Endothelial cell of umbilical vein (primary cell): ENCODE measurements at regions of chr10 and their contacts with region 1.

Region 1: DNA sequence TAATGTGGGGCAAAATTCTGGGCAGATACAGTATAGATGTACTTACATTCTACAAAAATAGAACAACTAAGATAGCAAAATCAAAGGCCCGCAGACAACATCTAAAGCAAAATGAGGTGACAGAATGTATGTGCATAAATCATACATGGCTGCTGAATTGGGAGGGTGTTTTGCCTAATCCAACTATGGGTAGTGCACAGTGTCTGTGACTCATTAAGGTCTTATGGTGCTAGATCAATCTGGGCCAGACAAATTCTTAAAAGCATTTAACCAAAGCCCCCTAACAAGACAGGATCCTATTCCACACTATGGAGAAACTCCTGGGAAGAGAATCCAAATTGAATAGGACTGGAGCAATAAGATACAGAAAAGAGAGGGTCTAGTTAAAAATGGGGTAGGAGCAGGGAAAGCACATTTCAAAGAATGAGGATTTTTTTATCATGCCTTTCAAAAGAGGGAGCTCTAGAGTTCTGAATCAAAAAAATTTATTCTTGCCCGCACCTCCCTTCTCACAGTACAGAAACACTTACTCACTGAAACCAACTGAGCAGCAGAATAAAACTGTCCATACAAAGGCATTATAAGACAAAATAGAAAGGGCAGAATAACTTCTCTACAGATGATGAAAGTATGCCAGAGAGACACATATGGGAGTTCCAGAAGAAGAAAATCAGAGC is 181.3 kb downstream of the RNLS start:
- DNase-seq: peak; percentile 16
- H3K4me3 ChIP-seq: no peak overlapping the region
- H3K27ac ChIP-seq: no peak overlapping the region
- H3K4me1 ChIP-seq: no peaks in the 10 kb centered on the region
- H3K27me3 ChIP-seq: no peaks in the 10 kb centered on the region
- CTCF ChIP-seq: peak in 1 of 2 donors; percentile 17
- POLR2A ChIP-seq: no peak

Region 2: DNA sequence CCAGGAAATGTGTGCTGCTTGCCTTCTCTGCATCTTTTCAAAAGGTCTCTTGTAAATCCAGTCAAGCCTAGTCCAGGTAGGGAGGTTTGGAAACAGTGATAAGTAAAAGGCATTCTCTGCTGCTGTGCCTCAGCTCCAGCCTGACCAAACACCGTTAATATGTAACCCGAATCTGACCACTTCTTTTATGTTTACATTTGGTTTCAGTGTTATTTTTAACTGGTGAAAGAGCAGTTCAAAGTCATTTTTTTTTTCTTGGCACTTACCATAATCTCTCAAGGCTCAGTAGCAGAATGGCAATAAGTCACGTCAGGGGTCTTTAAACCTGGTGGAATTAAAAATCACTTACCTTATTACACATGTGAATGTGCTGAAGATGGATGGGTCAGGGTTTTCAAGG is 321.6 kb before region 1 on chr10:
- CTCF ChIA-PET with region 1: no interaction called
- POLR2A ChIA-PET with region 1: no interaction called
- dilution Hi-C with region 1: no loop called
- intact Hi-C with region 1: no loop called
- DNase-seq: peak; percentile 28
- H3K4me3 ChIP-seq: no peak overlapping the region
- H3K27ac ChIP-seq: no peak overlapping the region
- H3K4me1 ChIP-seq: no peaks in the 10 kb centered on the region
- H3K27me3 ChIP-seq: peaks cover 0 to 4% of the 10 kb centered on the region in 2 experiments
- CTCF ChIP-seq: no peak
- POLR2A ChIP-seq: no peak

Region 3: GRCh38 chr10:88431103-88431502 is 29.3 kb after region 1 on chr10:
- CTCF ChIA-PET with region 1: no interaction called
- POLR2A ChIA-PET with region 1: no interaction called
- dilution Hi-C with region 1: no loop called
- intact Hi-C with region 1: loop called (anchors 1 kb)
- DNase-seq: no peak
- H3K4me3 ChIP-seq: no peak overlapping the region
- H3K27ac ChIP-seq: no peak overlapping the region
- H3K4me1 ChIP-seq: no peaks in the 10 kb centered on the region
- H3K27me3 ChIP-seq: no peaks in the 10 kb centered on the region
- CTCF ChIP-seq: no peak
- POLR2A ChIP-seq: no peak

Region 4: GRCh38 chr10:88456730-88457129 is 54.9 kb after region 1 on chr10:
- CTCF ChIA-PET with region 1: no interaction called
- POLR2A ChIA-PET with region 1: no interaction called
- dilution Hi-C with region 1: no loop called
- intact Hi-C with region 1: no loop called
- DNase-seq: no peak
- H3K4me3 ChIP-seq: no peak overlapping the region
- H3K27ac ChIP-seq: no peak overlapping the region
- H3K4me1 ChIP-seq: no peaks in the 10 kb centered on the region
- H3K27me3 ChIP-seq: peaks cover 2 to 3% of the 10 kb centered on the region in 2 experiments
- CTCF ChIP-seq: no peak
- POLR2A ChIP-seq: no peak